ENCODE measurements at regions of chr17 and their contacts with region 1.

Region 1: GRCh38 chr17:81702971-81703746 is at the start of gene MRPL12:
- DNase-seq: peak; percentile 94

Region 2: DNA sequence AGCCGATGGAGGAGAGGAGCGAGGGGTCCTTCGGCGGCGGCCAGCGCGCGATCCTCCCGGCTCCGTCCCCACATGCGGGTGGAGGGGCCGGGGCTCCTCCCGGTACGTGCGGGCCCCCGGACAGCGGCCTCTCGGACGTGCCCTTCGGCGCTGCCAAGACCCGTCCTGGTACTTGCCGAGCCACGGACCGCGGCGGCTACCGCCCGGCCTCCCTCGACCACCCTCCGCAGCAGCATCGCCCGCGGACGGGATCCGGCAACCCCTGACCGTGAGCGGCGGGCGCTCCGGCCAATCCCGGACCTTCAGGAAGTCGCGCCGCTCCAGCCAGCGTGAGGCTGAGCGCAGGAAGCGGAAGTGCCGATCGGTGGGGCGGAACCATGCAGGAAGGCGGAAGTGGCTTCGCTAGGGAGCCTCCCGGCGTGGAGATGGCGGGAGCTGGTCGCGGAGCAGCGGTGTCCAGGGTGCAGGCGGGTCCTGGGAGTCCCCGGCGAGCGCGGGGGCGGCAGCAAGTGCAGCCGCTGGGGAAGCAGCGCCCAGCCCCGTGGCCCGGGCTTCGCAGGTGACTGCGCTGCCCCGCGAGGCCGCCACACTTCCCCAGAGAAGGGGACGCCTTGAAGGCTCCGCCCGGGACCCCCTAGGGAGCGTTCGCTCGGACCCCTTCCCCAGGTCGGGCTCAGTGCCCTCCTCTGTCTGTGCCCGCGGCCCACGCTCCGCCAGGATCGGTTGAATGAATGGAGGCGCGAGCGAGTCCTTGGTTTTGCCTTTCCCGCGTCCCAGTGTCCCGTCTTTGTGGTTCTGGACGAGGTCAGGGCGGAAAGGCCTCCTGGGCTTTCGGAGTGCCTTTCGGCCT is 36.6 kb before region 1 on chr17 and contains the starts of genes CCDC137 and OXLD1:
- CTCF ChIA-PET with region 1: no interaction called
- POLR2A ChIA-PET with region 1: interaction called, 12 read pairs
- DNase-seq: peak; percentile 98

Region 3: DNA sequence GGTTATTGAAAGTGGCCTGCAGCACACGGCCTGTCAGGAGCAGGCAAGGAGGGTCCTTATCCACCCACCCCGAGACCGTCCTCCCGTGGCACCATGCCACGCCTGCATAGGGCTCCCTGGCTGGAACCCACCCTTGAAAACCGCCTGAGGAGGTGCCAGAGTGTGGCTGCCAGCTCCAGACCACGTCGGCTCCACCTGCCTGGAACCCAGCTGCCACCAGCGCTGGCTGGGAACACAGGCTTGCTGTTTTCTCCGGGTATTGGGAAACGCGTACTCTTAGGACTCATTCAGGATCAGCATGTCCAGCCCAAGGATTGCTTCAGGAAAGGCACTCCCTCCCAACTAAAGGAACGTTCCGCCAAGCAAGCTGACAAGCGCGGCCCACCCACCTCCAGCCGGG is 26.3 kb before region 1 on chr17:
- CTCF ChIA-PET with region 1: interaction called, 3 read pairs
- POLR2A ChIA-PET with region 1: interaction called, 120 read pairs
- DNase-seq: no peak

Region 4: DNA sequence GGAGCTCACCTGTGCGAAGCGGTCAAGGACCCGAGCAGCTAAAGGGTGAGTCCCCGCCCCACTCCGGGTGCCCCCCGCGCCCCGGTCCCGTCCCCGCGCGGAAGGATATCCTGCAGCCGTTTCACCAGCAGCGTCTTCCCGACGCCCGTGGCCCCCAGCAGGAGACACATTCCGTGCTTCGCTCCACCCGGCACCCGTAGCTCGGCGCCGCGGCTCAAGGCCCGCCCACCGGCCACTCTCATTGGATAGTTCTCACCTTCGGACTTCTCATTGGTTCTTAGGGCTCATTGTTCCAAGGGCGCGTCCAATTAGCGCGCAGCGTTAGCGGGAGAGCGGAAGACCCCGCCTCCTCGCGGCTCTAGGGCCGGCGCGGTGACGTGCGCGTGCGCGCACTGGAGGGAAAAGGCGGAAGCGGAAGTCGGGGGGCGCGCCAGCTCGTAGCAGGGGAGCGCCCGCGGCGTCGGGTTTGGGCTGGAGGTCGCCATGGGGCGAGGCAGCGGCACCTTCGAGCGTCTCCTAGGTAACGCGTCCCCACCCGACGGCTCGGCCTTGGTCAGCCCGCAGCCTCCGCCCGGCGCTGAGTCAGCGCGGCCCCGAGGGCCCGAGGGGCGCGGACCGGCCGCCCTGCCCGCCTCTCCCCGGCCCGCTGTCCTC is 19.4 kb before region 1 on chr17 and contains the starts of genes ARL16 and HGS:
- CTCF ChIA-PET with region 1: interaction called, 5 read pairs
- POLR2A ChIA-PET with region 1: interaction called, 120 read pairs
- DNase-seq: peak; percentile 99

Region 5: GRCh38 chr17:81741594-81742452 is 38.7 kb after region 1 on chr17:
- CTCF ChIA-PET with region 1: no interaction called
- POLR2A ChIA-PET with region 1: no interaction called
- DNase-seq: no peak

Measured in HEK293T (cell line).